ENCODE measurements at regions of chr7 and their contacts with region 1.

Region 1: GRCh38 chr7:4226525-4226884 is 455.6 kb upstream of the FOXK1 start:
- DNase-seq: peak; percentile 68
- ATAC-seq: peak; percentile 99
- H3K4me3 Mint-ChIP-seq: no peak overlapping the region
- H3K27ac Mint-ChIP-seq: peak overlapping the region; percentile 66; the same call in 1 of the 2 replicates
- H3K4me1 Mint-ChIP-seq: no peaks in the 10 kb centered on the region
- H3K27me3 Mint-ChIP-seq: no peaks in the 10 kb centered on the region
- CTCF ChIP-seq: peak; percentile 52; the same call in 1 of the 2 replicates

Region 2: DNA sequence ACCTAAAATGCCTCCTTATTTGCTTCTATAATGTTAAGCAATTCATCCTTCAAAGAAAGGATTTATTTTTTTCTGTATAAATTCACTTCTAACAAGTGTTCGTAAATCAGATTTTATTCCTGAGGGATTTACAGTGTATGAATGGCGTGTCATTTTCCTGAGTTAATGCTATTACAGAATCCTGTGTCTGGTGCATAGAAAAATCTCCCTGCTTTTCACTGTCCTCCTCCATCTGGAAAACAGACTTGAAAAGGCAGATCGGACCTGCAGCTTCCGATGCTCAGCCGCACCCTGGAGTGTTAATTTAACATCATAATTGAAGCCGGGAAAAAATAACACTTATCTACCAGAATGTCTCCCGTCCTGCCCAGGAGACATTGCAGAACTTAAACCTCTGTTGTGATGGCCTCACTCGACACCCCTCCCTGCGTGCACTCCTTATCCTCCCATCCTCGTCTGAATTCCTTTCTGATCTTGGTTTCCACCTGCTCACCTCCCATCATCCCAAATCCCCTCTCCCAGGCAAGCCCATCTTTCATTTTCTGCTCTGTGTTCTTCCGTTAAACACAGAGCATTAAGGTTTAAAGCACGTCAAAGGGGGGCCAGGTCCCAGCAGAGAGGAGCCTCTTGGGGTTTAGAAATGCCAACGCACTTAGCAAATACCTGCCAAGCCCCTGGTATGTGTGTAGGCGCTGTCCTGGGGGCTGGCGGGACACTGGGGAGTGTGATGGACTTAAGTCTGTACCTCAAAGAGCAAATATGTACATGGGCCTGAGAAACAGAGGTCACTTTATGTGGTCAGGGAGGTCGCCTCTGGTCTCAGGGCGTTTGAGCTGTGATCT is 13.7 kb after region 1 on chr7:
- CTCF ChIA-PET with region 1: interaction called, 13 read pairs
- POLR2A ChIA-PET with region 1: no interaction called
- DNase-seq: no peak
- ATAC-seq: peak; percentile 47
- H3K4me3 Mint-ChIP-seq: peak overlapping the region; percentile 12; the same call in 1 of the 2 replicates
- H3K27ac Mint-ChIP-seq: peak overlapping the region; percentile 75
- H3K4me1 Mint-ChIP-seq: peaks cover 32% of the 10 kb centered on the region
- H3K27me3 Mint-ChIP-seq: no peaks in the 10 kb centered on the region
- CTCF ChIP-seq: no peak

Region 3: DNA sequence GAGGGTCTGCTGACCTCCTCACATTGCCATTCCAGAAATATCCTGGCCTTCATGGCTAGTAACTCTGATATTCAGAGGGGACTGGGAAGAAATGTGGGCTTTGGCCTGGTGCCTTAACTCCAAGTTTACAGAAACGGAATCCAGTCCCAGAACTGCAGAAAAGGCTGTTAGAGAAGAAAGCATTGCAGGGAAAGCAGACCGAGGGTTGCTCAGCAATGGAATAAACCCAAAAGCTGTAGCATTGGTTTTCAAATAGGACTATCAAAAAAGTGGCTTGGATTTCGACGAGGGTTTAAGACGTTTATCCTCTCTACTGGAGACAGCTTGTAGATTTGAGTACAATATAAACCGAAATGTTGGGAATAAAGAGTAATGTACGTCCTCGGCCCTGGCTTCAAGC is 29.8 kb after region 1 on chr7:
- CTCF ChIA-PET with region 1: interaction called, 10 read pairs
- POLR2A ChIA-PET with region 1: no interaction called
- DNase-seq: no peak
- ATAC-seq: no peak
- H3K4me3 Mint-ChIP-seq: no peak overlapping the region
- H3K27ac Mint-ChIP-seq: no peak overlapping the region
- H3K4me1 Mint-ChIP-seq: no peaks in the 10 kb centered on the region
- H3K27me3 Mint-ChIP-seq: no peaks in the 10 kb centered on the region
- CTCF ChIP-seq: no peak

Region 4: DNA sequence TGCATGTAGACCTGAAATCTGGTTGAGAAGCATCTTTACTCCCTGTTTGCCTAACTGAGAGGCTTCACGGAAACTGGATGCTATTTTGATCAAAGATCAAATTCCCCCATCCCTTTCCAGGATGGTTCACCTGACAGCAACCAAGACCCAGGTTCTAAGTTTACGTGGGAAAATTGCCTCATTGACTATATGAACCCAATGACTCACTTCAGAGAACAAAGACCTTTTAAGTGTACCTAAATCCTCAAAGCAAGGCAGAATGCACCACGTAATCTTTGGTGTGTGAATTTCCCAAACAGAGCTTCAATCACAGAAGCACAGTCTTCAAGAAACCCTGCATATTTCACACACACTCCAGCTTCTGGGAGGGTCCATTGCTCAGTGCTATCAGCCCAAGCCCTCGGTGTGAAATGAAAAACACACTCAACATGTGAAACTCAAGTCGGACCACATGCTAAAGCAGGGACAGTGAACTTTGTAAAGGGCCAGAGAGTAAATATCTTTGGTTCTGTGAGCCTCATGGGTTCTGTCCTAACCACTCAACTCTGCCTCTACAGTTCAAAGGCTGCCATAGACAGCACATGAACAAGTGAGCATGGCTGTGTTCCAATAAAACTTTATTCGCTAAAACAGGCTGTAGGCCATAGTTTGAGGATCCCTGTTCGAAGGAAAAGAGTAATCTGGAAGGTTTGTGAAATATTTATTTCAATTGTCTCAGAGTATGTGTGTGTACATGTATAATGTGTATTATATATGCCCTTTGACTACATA is 180.0 kb after region 1 on chr7:
- CTCF ChIA-PET with region 1: no interaction called
- POLR2A ChIA-PET with region 1: no interaction called
- DNase-seq: no peak
- ATAC-seq: no peak
- H3K4me3 Mint-ChIP-seq: no peak overlapping the region
- H3K27ac Mint-ChIP-seq: no peak overlapping the region
- H3K4me1 Mint-ChIP-seq: no peaks in the 10 kb centered on the region
- H3K27me3 Mint-ChIP-seq: peaks cover 12% of the 10 kb centered on the region
- CTCF ChIP-seq: no peak

Region 5: GRCh38 chr7:4470246-4470645 is 243.7 kb after region 1 on chr7:
- CTCF ChIA-PET with region 1: interaction called, 15 read pairs
- POLR2A ChIA-PET with region 1: no interaction called
- DNase-seq: peak; percentile 49
- ATAC-seq: peak; percentile 61; the same call in 1 of the 2 replicates
- H3K4me3 Mint-ChIP-seq: no peak overlapping the region
- H3K27ac Mint-ChIP-seq: no peak overlapping the region
- H3K4me1 Mint-ChIP-seq: peaks cover 21% of the 10 kb centered on the region
- H3K27me3 Mint-ChIP-seq: no peaks in the 10 kb centered on the region
- CTCF ChIP-seq: no peak

Region 6: GRCh38 chr7:4479367-4480039 is 253.0 kb after region 1 on chr7:
- CTCF ChIA-PET with region 1: interaction called, 22 read pairs
- POLR2A ChIA-PET with region 1: no interaction called
- DNase-seq: peak; percentile 70
- ATAC-seq: peak; percentile 97
- H3K4me3 Mint-ChIP-seq: no peak overlapping the region
- H3K27ac Mint-ChIP-seq: no peak overlapping the region
- H3K4me1 Mint-ChIP-seq: no peaks in the 10 kb centered on the region
- H3K27me3 Mint-ChIP-seq: peaks cover 3% of the 10 kb centered on the region; the same call in 1 of the 2 replicates
- CTCF ChIP-seq: peak; percentile 34; the same call in 1 of the 2 replicates

Measured in WTC11 (cell line).